MCF 10A (cell line): ENCODE measurements at regions of chr6 and their contacts with region 1.

Region 1: DNA sequence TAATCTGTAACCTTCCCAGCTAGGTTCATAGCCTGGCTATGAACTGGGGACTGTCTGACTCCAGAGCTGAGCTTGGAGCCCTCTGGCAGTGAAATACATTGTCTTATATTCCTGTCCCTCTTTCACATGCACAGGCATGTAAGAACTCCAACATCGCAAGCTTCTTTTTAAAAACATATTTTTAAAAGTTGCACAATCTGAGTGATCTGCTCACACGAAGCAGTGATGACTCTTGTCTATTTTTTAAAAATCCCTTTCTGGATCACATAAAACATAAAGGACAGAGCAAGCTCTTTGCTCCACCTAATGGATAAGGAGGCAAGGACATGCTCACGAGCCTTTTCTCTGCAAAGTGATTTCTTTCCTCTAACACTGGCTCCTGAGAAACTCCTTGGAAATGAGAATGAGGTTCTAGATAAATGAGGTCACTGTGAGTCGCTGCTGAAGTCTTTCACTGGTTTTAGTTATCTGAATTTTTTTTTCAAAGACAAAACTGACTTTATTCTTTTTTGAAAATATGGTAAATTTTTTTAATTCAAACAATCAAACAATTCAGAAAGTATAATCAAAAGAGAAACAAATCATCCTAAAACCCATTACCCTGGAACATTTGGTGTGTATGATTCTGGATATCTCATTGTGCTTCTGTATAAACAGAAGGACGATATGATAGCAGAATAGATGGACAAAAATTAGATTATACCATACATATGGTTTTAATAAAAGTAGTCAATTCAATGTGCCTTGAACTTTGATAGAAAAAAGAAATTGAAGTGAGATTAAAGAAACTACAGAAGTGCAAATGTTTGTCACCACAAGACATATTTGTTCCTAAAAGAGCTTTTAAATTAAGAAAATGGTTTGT is 30.8 kb downstream of the IL20RA start:
- DNase-seq: peak; percentile 81
- H3K4me3 Mint-ChIP-seq: no peak overlapping the region
- H3K27ac Mint-ChIP-seq: peak overlapping the region; percentile 17
- H3K4me1 Mint-ChIP-seq: peaks cover 14% of the 10 kb centered on the region
- H3K27me3 Mint-ChIP-seq: no peaks in the 10 kb centered on the region
- CTCF ChIP-seq: peak; percentile 67

Region 2: GRCh38 chr6:136840276-136841001 is 173.5 kb before region 1 on chr6:
- CTCF ChIA-PET with region 1: interaction called, 13 read pairs
- POLR2A ChIA-PET with region 1: interaction called, 13 read pairs
- intact Hi-C with region 1: no loop called
- DNase-seq: no peak
- H3K4me3 Mint-ChIP-seq: no peak overlapping the region
- H3K27ac Mint-ChIP-seq: no peak overlapping the region
- H3K4me1 Mint-ChIP-seq: peaks cover 9% of the 10 kb centered on the region
- H3K27me3 Mint-ChIP-seq: no peaks in the 10 kb centered on the region
- CTCF ChIP-seq: no peak

Region 3: GRCh38 chr6:136962661-136963060 is 51.3 kb before region 1 on chr6:
- CTCF ChIA-PET with region 1: interaction called, 12 read pairs
- POLR2A ChIA-PET with region 1: interaction called, 55 read pairs
- intact Hi-C with region 1: no loop called
- DNase-seq: no peak
- H3K4me3 Mint-ChIP-seq: no peak overlapping the region
- H3K27ac Mint-ChIP-seq: no peak overlapping the region
- H3K4me1 Mint-ChIP-seq: no peaks in the 10 kb centered on the region
- H3K27me3 Mint-ChIP-seq: no peaks in the 10 kb centered on the region
- CTCF ChIP-seq: no peak

Region 4: GRCh38 chr6:137001299-137001976 is 12.5 kb before region 1 on chr6:
- CTCF ChIA-PET with region 1: interaction called, 5 read pairs
- POLR2A ChIA-PET with region 1: interaction called, 16 read pairs
- intact Hi-C with region 1: no loop called
- DNase-seq: peak; percentile 74
- H3K4me3 Mint-ChIP-seq: no peak overlapping the region
- H3K27ac Mint-ChIP-seq: no peak overlapping the region
- H3K4me1 Mint-ChIP-seq: peaks cover 23% of the 10 kb centered on the region
- H3K27me3 Mint-ChIP-seq: no peaks in the 10 kb centered on the region
- CTCF ChIP-seq: no peak

Region 5: DNA sequence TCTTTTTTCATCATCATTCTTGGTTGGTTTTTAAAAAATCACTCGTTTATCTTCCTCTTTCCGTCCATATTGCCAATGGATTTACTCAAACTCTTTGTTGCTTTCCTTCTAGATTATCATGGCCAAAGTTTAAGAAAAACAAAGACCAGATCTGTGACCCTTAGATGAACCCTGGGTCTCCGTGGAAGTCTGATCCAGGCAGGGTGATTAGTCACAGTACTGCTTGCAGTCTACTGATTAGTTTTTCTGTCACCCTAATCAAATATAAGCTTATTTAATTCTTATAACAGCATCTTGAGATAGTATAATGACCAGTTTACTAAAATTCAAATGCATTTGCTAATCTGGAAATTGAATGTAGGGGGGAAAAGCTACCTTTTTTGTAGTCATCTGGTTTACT is 1357.8 kb after region 1 on chr6:
- CTCF ChIA-PET with region 1: no interaction called
- POLR2A ChIA-PET with region 1: no interaction called
- intact Hi-C with region 1: no loop called
- DNase-seq: no peak
- H3K4me3 Mint-ChIP-seq: no peak overlapping the region
- H3K27ac Mint-ChIP-seq: no peak overlapping the region
- H3K4me1 Mint-ChIP-seq: no peaks in the 10 kb centered on the region
- H3K27me3 Mint-ChIP-seq: no peaks in the 10 kb centered on the region
- CTCF ChIP-seq: no peak